ENCODE measurements at regions of chr1 and their contacts with region 1.

Region 1: DNA sequence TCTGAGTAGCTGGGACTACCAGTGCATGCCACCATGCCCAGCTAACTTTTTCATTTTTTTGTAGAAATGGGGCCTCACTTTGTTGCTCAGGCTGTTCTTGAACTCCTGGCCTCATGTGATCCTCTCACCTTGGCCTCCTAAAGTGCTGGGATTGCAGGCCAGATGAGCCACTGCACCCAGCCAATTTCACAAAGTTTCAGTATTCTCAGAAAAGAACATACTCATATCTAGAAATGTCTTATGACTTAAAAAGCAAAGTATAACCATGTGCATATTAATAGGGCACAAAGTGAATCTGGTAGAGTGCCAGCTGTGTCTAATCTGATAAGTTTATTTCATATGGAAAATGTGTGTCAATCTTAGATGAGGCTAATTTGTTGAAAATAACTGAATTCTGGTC is 87.5 kb upstream of the CACYBP start:
- DNase-seq: no peak
- H3K4me3 Mint-ChIP-seq: no peak overlapping the region
- H3K27ac Mint-ChIP-seq: peak overlapping the region; percentile 20
- H3K4me1 Mint-ChIP-seq: peaks cover 24% of the 10 kb centered on the region
- H3K27me3 Mint-ChIP-seq: no peaks in the 10 kb centered on the region

Region 2: GRCh38 chr1:174815036-174815435 is 97.2 kb before region 1 on chr1:
- intact Hi-C with region 1: loop called (anchors 5 kb)
- DNase-seq: peak; percentile 60
- H3K4me3 Mint-ChIP-seq: no peak overlapping the region
- H3K27ac Mint-ChIP-seq: peak overlapping the region; percentile 14
- H3K4me1 Mint-ChIP-seq: peaks cover 18% of the 10 kb centered on the region
- H3K27me3 Mint-ChIP-seq: no peaks in the 10 kb centered on the region

Region 3: GRCh38 chr1:174938281-174939007 is 26.2 kb after region 1 on chr1:
- intact Hi-C with region 1: loop called (anchors 2 kb)
- DNase-seq: no peak
- H3K4me3 Mint-ChIP-seq: peak overlapping the region; percentile 50
- H3K27ac Mint-ChIP-seq: peak overlapping the region; percentile 73
- H3K4me1 Mint-ChIP-seq: peaks cover 8% of the 10 kb centered on the region
- H3K27me3 Mint-ChIP-seq: no peaks in the 10 kb centered on the region

Measured in activated CD4-positive, alpha-beta T cell treated with anti-CD3 and anti-CD28 coated beads, Interleukin-2, amount 10 ng/mL, durations not matched to agents 24 days and 14 days (primary cell).